Heart right ventricle (tissue), 16 donors: ENCODE measurements at regions of chr5 and their contacts with region 1.

Region 1: GRCh38 chr5:120655828-120656435 is 191.8 kb downstream of the PRR16 start:
- DNase-seq: no peak
- ATAC-seq: no peak
- H3K4me3 ChIP-seq: no peak overlapping the region
- H3K27ac ChIP-seq: no peak overlapping the region
- H3K4me1 ChIP-seq: no peaks in the 10 kb centered on the region
- H3K27me3 ChIP-seq: no peaks in the 10 kb centered on the region
- CTCF ChIP-seq: peak in 6 of 9 donors; percentile 21 to 32 (median 28)

Region 2: GRCh38 chr5:120538644-120539043 is 117.3 kb before region 1 on chr5:
- intact Hi-C with region 1: no loop called
- DNase-seq: peak in 1 of 2 donors; percentile 4
- ATAC-seq: peak in 4 of 8 donors; percentile 44 to 64 (median 48)
- H3K4me3 ChIP-seq: no peak overlapping the region
- H3K27ac ChIP-seq: peak overlapping the region in 2 of 10 donors; percentile 13 to 26
- H3K4me1 ChIP-seq: peaks cover 0 to 28% (median 12%) of the 10 kb centered on the region in 9 donors
- H3K27me3 ChIP-seq: no peaks in the 10 kb centered on the region
- CTCF ChIP-seq: no peak

Region 3: GRCh38 chr5:120644516-120644915 is 11.4 kb before region 1 on chr5:
- intact Hi-C with region 1: loop called in 1 of 10 experiments (anchors 1 kb)
- DNase-seq: no peak
- ATAC-seq: no peak
- H3K4me3 ChIP-seq: no peak overlapping the region
- H3K27ac ChIP-seq: no peak overlapping the region
- H3K4me1 ChIP-seq: no peaks in the 10 kb centered on the region
- H3K27me3 ChIP-seq: no peaks in the 10 kb centered on the region
- CTCF ChIP-seq: no peak

Region 4: DNA sequence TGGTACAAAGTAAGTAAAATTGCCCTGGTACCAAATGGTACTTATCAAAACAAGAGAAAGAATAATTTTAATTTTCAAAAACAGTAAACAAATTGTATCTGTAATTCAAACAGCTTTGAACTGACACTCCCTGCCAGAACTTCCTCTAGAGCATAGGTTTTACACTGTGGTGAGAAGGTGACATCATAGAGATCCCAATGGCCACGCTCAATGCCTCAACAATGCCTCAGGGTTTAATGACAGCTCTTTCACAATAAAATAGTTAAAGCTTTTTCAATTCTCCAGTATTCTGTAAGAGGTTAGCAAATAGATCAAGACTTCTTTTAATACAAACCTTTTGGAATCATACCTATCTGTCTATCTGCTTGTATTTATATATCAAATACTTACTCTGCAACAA is 245.3 kb after region 1 on chr5:
- intact Hi-C with region 1: no loop called
- DNase-seq: no peak
- ATAC-seq: no peak
- H3K4me3 ChIP-seq: no peak overlapping the region
- H3K27ac ChIP-seq: no peak overlapping the region
- H3K4me1 ChIP-seq: no peaks in the 10 kb centered on the region
- H3K27me3 ChIP-seq: no peaks in the 10 kb centered on the region
- CTCF ChIP-seq: no peak

Region 5: GRCh38 chr5:121949867-121950266 is 1293.9 kb after region 1 on chr5:
- intact Hi-C with region 1: loop called in 1 of 10 experiments (anchors 5 kb)
- DNase-seq: peak in 1 of 2 donors; percentile 16
- ATAC-seq: peak in 2 of 8 donors; percentile 43 to 67
- H3K4me3 ChIP-seq: no peak overlapping the region
- H3K27ac ChIP-seq: no peak overlapping the region
- H3K4me1 ChIP-seq: no peaks in the 10 kb centered on the region
- H3K27me3 ChIP-seq: no peaks in the 10 kb centered on the region
- CTCF ChIP-seq: peak in 7 of 9 donors; percentile 49 to 67 (median 57)